PC-9 (cell line): ENCODE measurements at regions of chr3 and their contacts with region 1.

Region 1: DNA sequence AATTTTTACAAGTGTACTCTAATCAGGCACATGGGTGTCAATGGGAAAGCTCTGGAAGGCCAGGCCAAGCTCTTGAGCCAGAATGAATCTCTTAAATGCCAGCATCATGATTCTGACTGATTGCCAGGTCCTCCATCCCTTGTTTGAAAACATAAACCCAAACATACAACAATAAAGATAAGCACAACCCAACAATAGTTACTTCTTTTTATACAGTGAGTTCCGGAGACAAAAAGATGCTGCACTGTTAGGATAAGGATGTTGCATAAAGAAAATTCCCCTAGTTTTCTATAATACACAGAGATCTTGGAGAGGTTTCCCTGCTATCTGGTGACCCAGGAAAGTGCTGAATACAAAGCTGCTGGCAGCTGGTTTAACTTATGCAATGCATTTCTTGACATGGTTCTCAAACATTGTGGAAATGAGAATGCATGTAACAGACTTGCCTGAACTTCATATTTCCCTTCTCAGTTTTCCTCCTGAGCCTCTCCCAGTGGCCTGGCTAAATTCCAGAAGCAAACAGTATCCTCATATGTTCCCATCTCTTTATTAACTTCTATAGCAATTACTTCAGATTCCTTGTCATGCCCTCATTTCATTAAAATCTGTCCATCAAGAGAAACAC is 180.1 kb upstream of the PRICKLE2 start:
- DNase-seq: no peak
- H3K4me3 ChIP-seq: no peak overlapping the region
- H3K27ac ChIP-seq: no peak overlapping the region
- H3K4me1 ChIP-seq: no peaks in the 10 kb centered on the region
- H3K27me3 ChIP-seq: no peaks in the 10 kb centered on the region
- CTCF ChIP-seq: no peak

Region 2: DNA sequence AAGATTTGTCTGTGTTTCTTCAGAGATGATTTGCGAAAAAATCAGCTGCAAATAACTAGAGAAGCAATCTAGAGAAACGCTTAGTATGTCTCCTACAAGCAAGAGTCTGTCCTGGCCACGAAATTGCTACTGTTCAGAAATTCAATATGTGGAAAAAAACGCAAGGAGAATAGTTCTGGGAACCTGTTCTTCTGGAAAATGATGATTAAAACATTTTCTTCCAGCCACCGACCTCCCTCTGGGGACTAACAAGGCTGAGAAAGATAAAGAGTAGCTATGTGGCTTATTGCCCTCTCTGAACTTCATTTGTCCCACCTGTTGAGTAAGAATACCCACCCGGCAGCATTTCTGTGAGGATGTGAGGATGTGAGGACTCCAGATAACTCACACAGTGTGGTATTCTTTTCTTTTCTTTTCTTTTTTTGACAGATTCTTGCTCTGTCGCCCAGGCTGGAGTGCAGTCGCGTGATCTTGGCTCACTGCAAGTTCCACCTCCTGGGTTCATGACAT is 721.2 kb before region 1 on chr3:
- CTCF ChIA-PET with region 1: no interaction called
- POLR2A ChIA-PET with region 1: interaction called, 20 read pairs
- intact Hi-C with region 1: no loop called
- DNase-seq: no peak
- H3K4me3 ChIP-seq: no peak overlapping the region
- H3K27ac ChIP-seq: no peak overlapping the region
- H3K4me1 ChIP-seq: no peaks in the 10 kb centered on the region
- H3K27me3 ChIP-seq: 0 out of 2 replicates have a peak, but pooled peaks cover 3% of the 10 kb centered on the region
- CTCF ChIP-seq: no peak

Region 3: DNA sequence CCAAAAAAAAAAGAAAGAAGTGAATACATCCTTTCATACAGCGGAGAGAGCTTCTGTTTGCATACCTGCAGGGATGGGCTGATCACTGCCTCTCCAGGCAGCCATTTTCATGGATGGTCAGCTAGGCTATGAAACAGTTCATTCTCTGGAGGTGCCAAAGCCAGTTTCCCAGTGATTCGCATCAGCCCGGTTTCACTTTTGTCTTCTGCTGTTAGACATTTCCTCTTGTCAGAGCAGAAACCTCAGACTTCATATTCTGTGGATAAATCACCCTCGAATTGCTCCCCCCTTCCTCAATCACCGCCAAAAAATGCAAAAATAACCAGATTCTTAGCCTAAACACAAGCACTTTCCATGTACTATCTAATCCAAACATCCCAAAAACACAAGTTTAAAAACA is 56.9 kb after region 1 on chr3:
- CTCF ChIA-PET with region 1: no interaction called
- POLR2A ChIA-PET with region 1: no interaction called
- intact Hi-C with region 1: loop called (anchors 10 kb)
- DNase-seq: no peak
- H3K4me3 ChIP-seq: no peak overlapping the region
- H3K27ac ChIP-seq: no peak overlapping the region
- H3K4me1 ChIP-seq: no peaks in the 10 kb centered on the region
- H3K27me3 ChIP-seq: no peaks in the 10 kb centered on the region
- CTCF ChIP-seq: no peak